SK-N-SH (cell line): ENCODE measurements at regions of chr18 and their contacts with region 1.

Region 1: DNA sequence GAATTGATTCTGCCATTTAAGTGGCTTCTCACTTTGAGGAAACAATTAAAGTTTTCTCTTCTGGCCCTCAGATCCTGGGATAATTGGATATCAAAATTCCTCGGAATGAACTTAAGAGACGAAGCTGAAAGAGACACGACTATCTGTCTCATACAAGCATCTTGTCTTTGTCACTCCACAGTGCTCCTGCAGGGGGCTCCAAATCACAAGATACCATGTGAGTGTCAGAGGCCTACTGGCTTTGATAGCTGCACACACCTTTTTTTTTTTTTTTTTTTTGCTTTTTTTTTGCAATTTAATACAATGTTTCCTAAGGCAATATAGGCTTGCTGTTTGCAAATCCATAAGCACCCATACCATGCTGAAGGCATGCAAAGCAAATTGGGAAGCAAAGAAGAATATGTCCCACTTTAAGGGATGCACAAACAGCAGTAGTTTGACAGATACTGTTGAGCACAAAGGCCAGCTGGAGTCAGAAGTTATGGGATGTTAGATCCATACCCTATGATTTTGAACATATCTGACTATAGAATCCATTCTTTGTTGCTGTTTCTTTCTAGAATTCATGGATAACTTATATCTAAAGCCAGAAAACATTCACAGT is 109.0 kb upstream of the CBLN2 start:
- DNase-seq: peak; percentile 61
- H3K4me3 ChIP-seq: no peak overlapping the region
- H3K27ac ChIP-seq: no peak overlapping the region
- H3K4me1 ChIP-seq: no peaks in the 10 kb centered on the region
- H3K27me3 ChIP-seq: no peaks in the 10 kb centered on the region
- CTCF ChIP-seq: peak; percentile 68
- EP300 ChIP-seq: no peak
- RAD21 ChIP-seq: peak; percentile 69

Region 2: DNA sequence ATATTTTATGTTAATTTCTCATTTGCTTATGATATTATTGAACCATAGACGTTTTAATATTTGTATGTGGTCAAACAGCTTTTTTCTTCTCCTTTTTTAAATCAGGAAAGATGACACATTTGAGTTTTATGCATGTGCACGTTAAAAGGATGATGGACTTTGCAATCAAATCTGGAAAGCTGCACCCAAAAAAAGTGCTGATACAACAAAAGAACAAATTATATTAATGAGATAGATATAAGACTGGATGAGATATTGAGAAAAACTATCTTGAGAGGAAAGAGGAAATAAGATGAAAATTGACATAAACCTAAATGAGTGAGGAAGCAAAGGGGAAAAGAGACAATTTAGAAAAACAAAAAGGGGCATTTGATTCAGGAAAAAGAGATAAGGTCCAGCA is 12.5 kb before region 1 on chr18:
- CTCF ChIA-PET with region 1: interaction called, 13 read pairs
- POLR2A ChIA-PET with region 1: no interaction called
- DNase-seq: no peak
- H3K4me3 ChIP-seq: peak overlapping the region; percentile 9 to 20; a peak in 1 of 4 replicates
- H3K27ac ChIP-seq: no peak overlapping the region
- H3K4me1 ChIP-seq: no peaks in the 10 kb centered on the region
- H3K27me3 ChIP-seq: no peaks in the 10 kb centered on the region
- CTCF ChIP-seq: no peak
- EP300 ChIP-seq: no peak
- RAD21 ChIP-seq: no peak

Region 3: DNA sequence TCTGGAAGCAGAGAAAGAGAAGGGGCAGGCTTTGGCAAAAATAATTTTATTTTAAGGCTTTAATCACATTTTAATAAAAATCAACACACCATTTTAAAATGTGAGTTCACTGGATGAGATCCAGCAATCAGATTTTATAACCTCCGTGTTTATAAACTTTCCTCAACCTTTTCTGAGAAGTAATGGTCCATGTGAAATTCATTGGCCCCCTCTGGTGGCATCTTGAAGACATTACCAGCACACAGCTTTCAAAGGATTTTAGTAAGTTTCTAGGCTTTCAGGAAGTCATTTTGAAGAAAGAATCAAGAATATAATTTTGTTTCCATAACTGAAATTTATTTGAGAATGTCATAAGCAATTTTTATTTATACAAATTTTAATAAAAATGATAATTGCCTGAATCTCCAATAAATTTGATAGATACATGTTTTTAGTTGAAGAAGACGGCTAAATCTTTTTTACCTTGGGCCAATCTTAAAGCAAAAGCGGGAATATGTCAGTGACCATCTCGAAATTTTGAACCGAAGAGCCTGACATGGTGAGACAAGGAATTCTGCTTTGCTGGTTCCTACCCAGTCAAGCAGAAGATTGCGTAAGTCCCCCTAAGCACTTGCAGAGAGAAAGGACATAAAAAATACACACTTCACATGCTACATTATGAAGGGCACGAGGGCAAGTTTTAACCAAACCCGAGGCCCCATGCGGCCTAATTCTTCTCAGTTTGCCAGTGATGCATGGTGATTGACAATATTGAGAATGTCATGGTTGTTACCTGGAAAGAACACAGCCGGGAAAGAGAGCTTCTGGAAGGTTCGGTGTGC is 19.5 kb after region 1 on chr18:
- CTCF ChIA-PET with region 1: interaction called, 37 read pairs
- POLR2A ChIA-PET with region 1: no interaction called
- DNase-seq: peak; percentile 60
- H3K4me3 ChIP-seq: peak overlapping the region in 1 of 2 experiments; percentile 46; a peak in 1 of 4 replicates
- H3K27ac ChIP-seq: no peak overlapping the region
- H3K4me1 ChIP-seq: no peaks in the 10 kb centered on the region
- H3K27me3 ChIP-seq: no peaks in the 10 kb centered on the region
- CTCF ChIP-seq: peak; percentile 81
- EP300 ChIP-seq: no peak
- RAD21 ChIP-seq: peak; percentile 78